ENCODE measurements at regions of chr1 and their contacts with region 1.

Region 1: GRCh38 chr1:158998781-158999161 is 10.9 kb upstream of the IFI16 start:
- DNase-seq: peak; percentile 80
- ATAC-seq: peak; percentile 29
- H3K4me3 ChIP-seq: peak overlapping the region; percentile 61
- H3K27ac ChIP-seq: no peak overlapping the region
- H3K4me1 ChIP-seq: peaks cover 14% of the 10 kb centered on the region
- H3K27me3 ChIP-seq: no peaks in the 10 kb centered on the region
- CTCF ChIP-seq: peak; percentile 98

Region 2: DNA sequence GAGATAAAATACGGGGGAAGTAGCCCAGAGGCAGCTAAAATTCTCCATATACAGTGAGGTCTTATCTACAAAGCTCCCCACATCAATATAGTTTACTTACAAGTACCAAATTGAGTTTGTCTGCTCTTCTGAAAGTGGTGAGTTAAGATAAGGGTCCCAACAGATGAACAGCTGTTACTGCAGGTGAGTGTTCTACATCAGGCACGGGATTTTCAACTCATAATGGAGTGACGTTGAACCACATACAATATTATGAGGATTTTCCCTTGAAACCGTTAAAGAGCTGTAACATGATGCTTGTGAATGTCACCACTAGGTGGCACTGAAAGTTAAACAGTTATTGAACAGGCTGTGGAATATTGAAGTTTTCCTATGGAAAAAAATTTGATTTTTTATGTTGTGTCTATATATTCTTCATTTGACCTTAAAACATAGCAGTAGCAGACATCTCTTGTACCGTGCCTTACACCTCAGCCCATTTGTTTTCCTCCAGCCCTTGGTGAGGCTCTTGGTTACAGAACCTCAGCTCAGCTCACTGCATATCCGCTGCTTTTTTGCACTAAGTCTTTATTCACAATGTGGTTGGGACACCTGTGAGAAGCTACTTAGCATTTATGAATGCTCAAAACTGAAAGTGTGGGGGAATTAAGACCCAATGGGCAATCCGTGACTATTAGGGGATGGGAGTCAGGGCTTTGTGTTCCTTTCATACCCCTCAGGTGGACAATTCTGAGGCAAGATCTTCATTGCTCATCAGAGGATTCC is 794.9 kb before region 1 on chr1:
- CTCF ChIA-PET with region 1: interaction called, 4 read pairs
- POLR2A ChIA-PET with region 1: no interaction called
- intact Hi-C with region 1: loop called (anchors 1 kb)
- DNase-seq: peak; percentile 80
- ATAC-seq: peak; percentile 97
- H3K4me3 ChIP-seq: no peak overlapping the region
- H3K27ac ChIP-seq: no peak overlapping the region
- H3K4me1 ChIP-seq: no peaks in the 10 kb centered on the region
- H3K27me3 ChIP-seq: peaks cover 28% of the 10 kb centered on the region
- CTCF ChIP-seq: peak; percentile 91

Region 3: DNA sequence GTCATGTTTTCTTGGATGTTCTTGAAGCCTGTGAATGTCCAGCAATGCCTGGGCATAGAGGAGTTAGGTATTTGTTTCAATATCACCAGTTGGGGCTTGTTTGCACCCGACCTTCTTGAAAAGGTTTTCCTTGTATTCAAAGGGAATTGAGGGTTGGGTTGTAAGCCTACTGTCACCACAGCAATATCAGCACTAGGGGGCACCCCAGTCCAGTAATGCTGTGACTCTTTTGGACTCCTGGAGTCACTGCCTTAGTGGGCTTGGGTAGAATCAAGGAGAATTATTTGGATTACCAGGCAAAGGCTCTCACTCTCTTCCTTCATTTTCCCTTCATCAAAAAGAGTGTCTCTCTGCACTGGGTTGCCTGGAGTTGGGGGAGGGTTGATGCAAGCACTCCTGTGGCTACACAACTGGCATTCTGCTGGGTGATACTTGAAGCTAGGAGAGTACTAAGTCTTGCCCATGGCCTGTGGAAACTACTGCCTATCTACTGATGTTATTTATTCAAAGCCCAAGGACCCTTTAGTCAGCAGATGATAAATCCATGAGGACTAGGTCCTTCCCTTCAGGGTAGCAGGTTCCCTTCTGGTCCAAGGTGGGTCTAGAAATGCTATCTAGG is 492.3 kb before region 1 on chr1:
- CTCF ChIA-PET with region 1: no interaction called
- POLR2A ChIA-PET with region 1: no interaction called
- intact Hi-C with region 1: loop called (anchors 5 kb)
- DNase-seq: peak; percentile 32
- ATAC-seq: no peak
- H3K4me3 ChIP-seq: no peak overlapping the region
- H3K27ac ChIP-seq: no peak overlapping the region
- H3K4me1 ChIP-seq: no peaks in the 10 kb centered on the region
- H3K27me3 ChIP-seq: peaks cover 5% of the 10 kb centered on the region; the same call in 1 of the 2 replicates
- CTCF ChIP-seq: peak; percentile 64

Region 4: GRCh38 chr1:158666037-158666436 is 332.7 kb before region 1 on chr1:
- CTCF ChIA-PET with region 1: no interaction called
- POLR2A ChIA-PET with region 1: no interaction called
- intact Hi-C with region 1: no loop called
- DNase-seq: no peak
- ATAC-seq: no peak
- H3K4me3 ChIP-seq: no peak overlapping the region
- H3K27ac ChIP-seq: no peak overlapping the region
- H3K4me1 ChIP-seq: no peaks in the 10 kb centered on the region
- H3K27me3 ChIP-seq: no peaks in the 10 kb centered on the region
- CTCF ChIP-seq: no peak

Region 5: DNA sequence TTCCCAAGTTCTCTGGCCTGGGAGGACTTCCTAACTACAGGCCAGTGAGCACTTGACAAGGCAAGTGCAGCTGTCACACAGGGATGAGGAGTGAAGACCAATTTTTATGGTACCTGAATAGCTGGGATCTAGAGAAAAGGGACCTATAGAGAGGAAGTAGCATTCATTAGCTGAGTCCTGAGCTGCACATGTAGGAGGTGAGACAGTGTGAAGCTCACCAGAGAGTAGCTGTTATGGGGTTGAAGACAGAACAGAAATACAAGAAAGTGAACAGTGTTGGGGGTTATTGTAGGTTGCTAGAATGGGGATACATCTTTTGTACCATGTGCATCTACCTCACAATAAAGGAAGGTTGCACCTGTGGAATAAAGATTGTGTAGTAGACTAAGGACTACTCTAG is 105.1 kb before region 1 on chr1:
- CTCF ChIA-PET with region 1: no interaction called
- POLR2A ChIA-PET with region 1: no interaction called
- intact Hi-C with region 1: loop called (anchors 10 kb)
- DNase-seq: no peak
- ATAC-seq: no peak
- H3K4me3 ChIP-seq: no peak overlapping the region
- H3K27ac ChIP-seq: no peak overlapping the region
- H3K4me1 ChIP-seq: no peaks in the 10 kb centered on the region
- H3K27me3 ChIP-seq: peaks cover 7% of the 10 kb centered on the region; the same call in 1 of the 2 replicates
- CTCF ChIP-seq: no peak

Region 6: DNA sequence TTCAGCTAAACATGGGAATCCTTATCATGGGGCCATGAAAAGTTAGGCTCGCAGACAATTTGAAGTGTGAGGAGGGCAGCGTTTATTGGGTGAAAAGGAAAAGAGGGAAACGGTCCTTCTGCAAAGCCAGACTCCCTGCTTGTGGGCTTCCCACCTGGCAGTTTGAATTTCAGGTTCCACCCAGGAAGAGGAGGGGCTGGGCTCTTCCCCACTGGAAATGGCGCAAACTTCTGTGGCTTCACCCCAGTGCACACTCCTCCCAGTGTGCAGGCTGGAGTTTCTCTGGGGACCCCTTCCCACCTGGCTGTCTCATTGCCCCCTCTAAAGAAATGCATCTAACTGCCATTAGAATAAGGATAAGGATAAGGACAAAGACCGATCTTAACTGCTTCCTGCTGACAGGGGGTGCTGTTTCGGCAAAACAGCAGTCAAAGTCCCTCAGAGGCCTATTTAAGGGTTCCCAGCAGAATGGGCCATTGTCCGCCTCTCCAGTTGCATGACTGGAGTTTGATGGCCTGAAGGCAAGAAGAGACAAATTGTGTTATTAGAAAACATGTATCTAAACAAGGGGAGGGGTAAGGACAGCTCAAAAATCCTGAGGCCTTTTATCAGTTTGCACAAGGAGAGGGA is 57.4 kb after region 1 on chr1:
- CTCF ChIA-PET with region 1: no interaction called
- POLR2A ChIA-PET with region 1: no interaction called
- intact Hi-C with region 1: loop called (anchors 2 kb)
- DNase-seq: no peak
- ATAC-seq: no peak
- H3K4me3 ChIP-seq: no peak overlapping the region
- H3K27ac ChIP-seq: no peak overlapping the region
- H3K4me1 ChIP-seq: no peaks in the 10 kb centered on the region
- H3K27me3 ChIP-seq: peaks cover 19% of the 10 kb centered on the region; the same call in 1 of the 2 replicates
- CTCF ChIP-seq: no peak; the same call in 1 of the 2 replicates

Measured in PC-3 (cell line).